ENCODE measurements at regions of chr19 and their contacts with region 1.

Region 1: DNA sequence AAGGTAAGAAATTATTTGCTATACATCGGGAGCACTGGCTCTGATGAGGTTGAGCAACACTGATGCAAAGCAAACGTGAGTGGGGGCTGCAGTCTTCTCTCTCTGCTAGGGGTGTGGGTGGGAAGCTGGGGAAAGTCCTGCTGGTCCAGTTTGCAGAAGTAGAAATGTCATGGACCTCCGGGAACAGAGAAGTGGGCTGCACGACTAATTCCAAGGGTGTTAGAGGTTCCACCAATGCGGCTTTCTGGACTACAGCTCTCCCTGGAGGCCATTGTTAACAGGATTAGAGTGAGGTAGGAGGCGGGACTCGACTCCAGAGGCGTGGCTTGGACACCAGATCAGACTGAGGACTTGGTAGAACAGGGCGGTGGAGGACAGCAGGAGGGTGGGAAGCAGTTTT is 5.7 kb upstream of the FBXO27 start:
- DNase-seq: no peak
- H3K4me3 Mint-ChIP-seq: no peak overlapping the region
- H3K27ac Mint-ChIP-seq: no peak overlapping the region
- H3K4me1 Mint-ChIP-seq: no peaks in the 10 kb centered on the region
- H3K27me3 Mint-ChIP-seq: peaks cover 17% of the 10 kb centered on the region

Region 2: DNA sequence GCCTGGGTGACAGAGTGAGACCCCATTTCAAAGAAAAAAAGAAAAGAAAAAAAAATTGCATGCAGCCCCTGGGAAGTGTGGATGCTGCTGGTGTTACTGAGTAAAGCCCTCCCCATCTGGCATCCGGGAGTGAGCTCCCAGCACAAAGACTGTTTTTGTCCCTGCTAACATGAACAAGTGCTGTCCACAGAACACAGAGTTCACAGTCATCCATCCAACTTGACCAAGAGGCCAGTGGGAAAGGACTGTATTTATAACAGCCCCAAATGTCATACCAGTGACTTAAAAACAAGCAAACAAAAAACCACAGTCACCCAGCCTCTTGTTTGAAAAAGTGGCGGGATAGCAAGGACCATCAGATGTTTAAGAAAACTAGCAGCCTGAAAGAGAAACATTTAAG is 73.4 kb before region 1 on chr19:
- intact Hi-C with region 1: loop called (anchors 2 kb)
- DNase-seq: no peak
- H3K4me3 Mint-ChIP-seq: no peak overlapping the region
- H3K27ac Mint-ChIP-seq: no peak overlapping the region
- H3K4me1 Mint-ChIP-seq: peaks cover 3% of the 10 kb centered on the region
- H3K27me3 Mint-ChIP-seq: peaks cover 11% of the 10 kb centered on the region

Region 3: GRCh38 chr19:39351537-39352064 is 313.5 kb after region 1 on chr19:
- intact Hi-C with region 1: no loop called
- DNase-seq: peak; percentile 86
- H3K4me3 Mint-ChIP-seq: peak overlapping the region; percentile 15
- H3K27ac Mint-ChIP-seq: peak overlapping the region; percentile 85
- H3K4me1 Mint-ChIP-seq: peaks cover 37% of the 10 kb centered on the region
- H3K27me3 Mint-ChIP-seq: no peaks in the 10 kb centered on the region